ENCODE measurements at regions of chr20 and their contacts with region 1.

Region 1: GRCh38 chr20:3811467-3812258 is 8.7 kb upstream of the AP5S1 start:
- DNase-seq: peak; percentile 95 to 99
- H3K4me3 ChIP-seq: peak overlapping the region; percentile 44 to 59
- H3K27ac ChIP-seq: peak overlapping the region; percentile 83 to 88
- H3K4me1 ChIP-seq: peaks cover 23 to 37% of the 10 kb centered on the region in 2 donors
- H3K27me3 ChIP-seq: no peaks in the 10 kb centered on the region
- CTCF ChIP-seq: no peak

Region 2: DNA sequence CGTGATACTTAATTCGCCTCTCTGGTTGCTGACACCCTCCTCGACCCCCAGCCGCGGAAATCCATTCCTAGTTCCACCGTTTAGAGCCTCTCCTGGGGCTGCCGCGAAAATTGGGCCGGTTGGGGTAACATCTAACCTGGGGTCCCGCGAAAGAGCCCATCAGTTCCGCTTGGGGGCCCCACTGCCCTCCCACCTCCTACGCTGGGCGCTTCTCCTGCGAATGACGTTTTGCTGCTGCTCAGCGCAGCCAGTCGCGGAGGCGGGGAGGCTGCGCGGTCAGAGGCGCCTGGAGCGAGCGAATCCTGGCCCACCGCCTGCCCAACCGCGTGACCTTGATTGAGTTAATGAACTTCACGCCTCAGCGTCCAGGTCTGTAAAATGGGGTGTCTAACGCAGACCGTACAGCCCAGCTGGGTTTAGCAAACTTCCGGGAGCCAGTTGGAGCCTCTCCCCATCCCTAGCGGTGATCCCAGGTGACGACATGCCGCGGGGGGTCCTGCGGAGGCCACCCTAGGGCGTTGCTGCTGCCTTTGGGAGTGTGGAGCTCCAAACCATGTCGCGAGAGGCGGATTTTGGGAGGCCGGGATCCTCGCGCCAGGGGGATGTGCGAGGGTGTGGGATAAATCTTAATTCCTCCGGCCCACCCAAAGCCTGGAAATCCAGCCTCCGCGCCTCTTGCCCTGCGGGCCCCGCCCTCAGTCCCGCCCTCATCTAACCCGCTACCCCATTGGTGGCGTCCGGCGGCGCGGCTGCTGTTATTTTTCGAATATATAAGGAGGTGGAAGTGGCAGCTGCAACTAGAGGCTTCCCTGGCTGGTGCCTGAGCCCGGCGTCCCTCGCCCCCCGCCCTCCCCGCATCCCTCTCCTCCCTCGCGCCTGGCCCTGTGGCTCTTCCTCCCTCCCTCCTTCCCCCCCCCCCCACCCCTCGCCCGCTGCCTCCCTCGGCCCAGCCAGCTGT is 15.9 kb before region 1 on chr20 and contains the start of gene CDC25B:
- intact Hi-C with region 1: loop called (anchors 1 kb)
- DNase-seq: peak; percentile 85 to 98
- H3K4me3 ChIP-seq: peak within 1 kb of the TSS; percentile 66 to 74
- H3K27ac ChIP-seq: peak within 1 kb of the TSS; percentile 91 to 96
- H3K4me1 ChIP-seq: peaks cover 14 to 27% of the 10 kb centered on the region in 2 donors
- H3K27me3 ChIP-seq: no peaks in the 10 kb centered on the region
- CTCF ChIP-seq: peak; percentile 36 to 78 (median 45)
- total RNA-seq, gene CDC25B: 60.6 TPM

Region 3: DNA sequence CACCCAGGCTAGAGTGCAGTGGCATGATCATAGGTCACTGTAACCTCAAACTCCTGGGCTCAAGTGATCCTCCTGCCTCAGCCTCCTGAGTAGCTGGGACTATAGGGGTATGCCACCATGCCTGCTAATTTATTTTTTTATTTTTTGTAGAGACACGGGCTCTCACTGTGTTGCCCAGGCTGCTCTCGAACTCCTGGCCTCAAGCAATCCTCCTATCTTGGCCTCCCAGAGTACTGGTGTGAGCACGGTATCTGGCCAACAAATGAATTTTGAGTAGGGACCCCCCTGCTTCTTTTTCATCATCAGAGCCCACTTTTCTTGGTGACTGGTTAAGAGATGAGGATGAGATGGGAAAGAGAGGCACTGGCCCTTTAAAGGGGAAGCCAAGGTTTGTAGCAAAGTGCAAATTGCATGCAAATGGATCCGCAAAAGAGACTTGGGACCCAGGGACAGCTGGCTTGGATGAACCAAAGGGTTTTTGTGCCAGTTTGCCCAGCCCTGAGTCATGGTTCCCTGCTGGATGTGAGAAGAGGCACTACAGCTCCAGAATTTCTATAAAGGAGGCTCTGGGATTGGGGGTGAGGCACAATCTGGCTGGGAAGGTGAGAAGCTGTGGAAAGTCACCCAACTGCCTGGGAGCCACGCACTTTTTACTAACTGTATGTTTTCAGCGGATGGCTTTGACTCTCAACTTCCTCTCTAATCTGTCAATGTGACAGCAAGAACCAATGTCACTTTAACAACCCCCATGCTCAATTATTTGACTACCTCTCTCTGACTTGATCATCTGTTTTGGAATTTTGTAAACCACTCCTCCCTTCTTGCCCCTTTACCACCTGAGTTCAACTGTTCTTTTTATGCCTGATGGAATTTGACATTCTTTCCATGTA is 262.4 kb after region 1 on chr20:
- intact Hi-C with region 1: loop called (anchors 5 kb)
- DNase-seq: peak in 1 of 2 donors; percentile 53
- H3K4me3 ChIP-seq: no peak overlapping the region
- H3K27ac ChIP-seq: peak overlapping the region; percentile 84 to 94
- H3K4me1 ChIP-seq: peaks cover 5 to 43% of the 10 kb centered on the region in 2 donors
- H3K27me3 ChIP-seq: no peaks in the 10 kb centered on the region
- CTCF ChIP-seq: no peak

Measured in ascending aorta (tissue), 2 donors.